Heart left ventricle (tissue), 16 donors: ENCODE measurements at regions of chr7 and their contacts with region 1.

Region 1: GRCh38 chr7:148962823-148963582 is 65.3 kb downstream of the PDIA4 start:
- DNase-seq: peak in 4 of 5 donors; percentile 68 to 76 (median 72)
- ATAC-seq: peak; percentile 81 to 85 (median 84)
- H3K4me3 ChIP-seq: peak overlapping the region; percentile 34 to 79 (median 61)
- H3K27ac ChIP-seq: peak overlapping the region; percentile 5 to 87 (median 71)
- H3K4me1 ChIP-seq: peaks cover 0 to 25% (median 8%) of the 10 kb centered on the region in 12 donors
- H3K27me3 ChIP-seq: no peaks in the 10 kb centered on the region
- CTCF ChIP-seq: peak; percentile 39 to 94 (median 76)
- POLR2A ChIP-seq: no peak

Region 2: GRCh38 chr7:148503875-148504487 is 459.0 kb before region 1 on chr7:
- intact Hi-C with region 1: loop called (anchors 2 to 5 kb)
- DNase-seq: no peak
- ATAC-seq: no peak
- H3K4me3 ChIP-seq: no peak overlapping the region
- H3K27ac ChIP-seq: no peak overlapping the region
- H3K4me1 ChIP-seq: no peaks in the 10 kb centered on the region
- H3K27me3 ChIP-seq: peaks cover 0 to 21% (median 4%) of the 10 kb centered on the region in 9 donors
- CTCF ChIP-seq: peak; percentile 66 to 86 (median 79)
- POLR2A ChIP-seq: no peak

Region 3: GRCh38 chr7:148698397-148699023 is 264.5 kb before region 1 on chr7 and contains the start of gene CUL1:
- intact Hi-C with region 1: loop called in 4 of 10 experiments (anchors 5 to 10 kb)
- DNase-seq: peak; percentile 90 to 94 (median 91)
- ATAC-seq: peak; percentile 77 to 95 (median 88)
- H3K4me3 ChIP-seq: peak within 1 kb of the TSS; percentile 76 to 98 (median 87)
- H3K27ac ChIP-seq: peak within 1 kb of the TSS; percentile 92 to 99 (median 97)
- H3K4me1 ChIP-seq: peaks cover 9 to 47% (median 36%) of the 10 kb centered on the region in 12 donors
- H3K27me3 ChIP-seq: no peaks in the 10 kb centered on the region
- CTCF ChIP-seq: peak in 1 of 12 donors; percentile 2
- POLR2A ChIP-seq: peak in 1 of 2 donors; percentile 57
- total RNA-seq, gene CUL1: 39.8 to 58.3 (median 43.6) TPM

Region 4: GRCh38 chr7:148862481-148862880 is 100.5 kb before region 1 on chr7:
- intact Hi-C with region 1: loop called in 7 of 10 experiments (anchors 2 to 10 kb)
- DNase-seq: no peak
- ATAC-seq: no peak
- H3K4me3 ChIP-seq: no peak overlapping the region
- H3K27ac ChIP-seq: no peak overlapping the region
- H3K4me1 ChIP-seq: no peaks in the 10 kb centered on the region
- H3K27me3 ChIP-seq: no peaks in the 10 kb centered on the region
- CTCF ChIP-seq: no peak
- POLR2A ChIP-seq: no peak

Region 5: DNA sequence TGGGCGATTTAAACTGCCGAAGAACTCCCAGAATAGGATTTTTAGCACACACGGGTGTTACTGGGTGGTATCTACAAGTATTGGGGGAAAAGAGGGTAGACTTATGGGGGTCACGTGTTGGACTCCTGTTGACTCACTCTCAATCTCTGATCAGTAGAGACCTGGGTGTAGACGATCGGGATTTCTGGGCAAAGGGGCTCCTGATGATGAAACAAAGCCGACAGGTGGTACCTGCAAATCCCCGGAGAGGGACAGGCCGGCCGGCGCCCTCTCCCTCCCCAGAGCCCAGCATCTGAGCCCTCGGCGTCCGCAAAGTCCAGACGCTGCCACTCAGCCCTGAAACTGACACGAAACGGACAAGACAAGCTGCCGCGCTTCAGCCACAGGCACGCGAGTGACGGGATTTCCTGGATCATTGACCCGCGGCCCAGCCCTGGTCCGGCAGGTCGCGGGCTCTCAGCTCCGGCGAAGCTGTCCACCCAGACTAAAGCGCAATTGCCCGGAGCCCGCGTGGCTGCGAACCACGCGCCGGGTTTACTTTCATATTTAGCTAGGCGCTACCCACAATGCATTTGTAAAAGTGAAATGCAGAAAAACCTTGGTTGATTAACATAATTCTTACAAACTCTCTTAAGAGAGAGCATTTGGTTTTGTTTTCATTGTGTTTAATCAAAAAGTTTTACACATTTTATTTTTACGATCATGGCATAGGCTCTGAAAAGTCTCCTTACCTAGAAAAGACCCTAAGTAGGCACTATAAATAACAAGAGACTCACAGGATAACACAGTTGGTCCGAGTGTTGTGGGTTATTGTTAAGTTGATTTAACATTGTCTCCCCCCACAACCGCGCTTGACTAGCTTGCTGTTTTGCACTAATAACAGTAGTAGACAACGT is 22.1 kb before region 1 on chr7:
- intact Hi-C with region 1: loop called in 3 of 10 experiments (anchors 1 to 2 kb)
- DNase-seq: peak; percentile 79 to 90 (median 86)
- ATAC-seq: peak; percentile 88 to 98 (median 96)
- H3K4me3 ChIP-seq: peak overlapping the region; percentile 50 to 83 (median 72)
- H3K27ac ChIP-seq: peak overlapping the region; percentile 7 to 94 (median 74)
- H3K4me1 ChIP-seq: peaks cover 0 to 16% (median 5%) of the 10 kb centered on the region in 12 donors
- H3K27me3 ChIP-seq: no peaks in the 10 kb centered on the region
- CTCF ChIP-seq: peak in 1 of 12 donors; percentile 15
- POLR2A ChIP-seq: peak in 1 of 2 donors; percentile 42